ENCODE measurements at regions of chr19 and their contacts with region 1.

Region 1: DNA sequence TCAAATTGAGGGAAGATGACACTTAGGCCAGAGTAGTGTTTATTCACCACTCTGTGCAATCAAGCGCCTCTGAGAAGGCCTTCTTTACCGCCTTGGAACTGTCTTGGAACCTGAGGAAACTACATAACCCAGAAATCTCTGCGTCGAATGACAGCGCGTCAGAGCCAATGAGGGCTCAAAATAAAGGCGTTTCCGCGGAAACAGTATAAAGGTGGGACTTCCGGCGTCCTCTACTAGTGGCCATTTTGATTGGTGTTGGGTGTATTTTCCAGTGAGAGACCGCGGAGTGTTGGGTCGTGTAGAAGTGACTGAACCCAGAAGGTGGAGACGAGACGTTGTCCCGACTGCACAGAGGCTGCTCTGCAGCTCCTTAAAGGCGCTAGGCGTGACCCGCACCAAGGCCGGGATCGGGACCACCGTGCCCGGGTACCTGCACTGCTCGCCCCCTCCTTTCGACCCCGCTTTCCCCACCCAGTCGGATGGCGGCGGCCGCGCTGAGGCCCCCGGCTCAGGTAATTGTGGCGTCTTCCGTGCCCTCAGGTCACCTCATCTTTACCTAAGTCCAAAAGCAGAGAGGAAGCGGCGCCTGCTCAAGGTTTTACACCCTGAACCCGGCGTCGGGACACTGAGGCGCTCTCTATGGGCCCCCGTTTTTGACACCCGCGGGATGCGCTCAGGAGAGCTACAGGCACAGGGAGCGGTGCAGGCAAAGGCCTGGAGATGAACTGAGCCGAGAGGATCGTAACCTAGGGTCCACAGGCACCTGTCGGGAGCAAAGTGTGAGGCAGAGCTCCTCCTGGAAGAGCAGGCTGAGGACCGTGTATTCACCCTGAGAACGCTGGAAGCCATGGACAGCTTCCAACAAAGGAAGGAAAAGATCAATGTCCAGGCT is at the start of gene ZNF776:
- DNase-seq: peak; percentile 85 to 94 (median 87)
- H3K4me3 ChIP-seq: peak within 1 kb of the TSS; percentile 84 to 92 (median 87)
- H3K4me3 Mint-ChIP-seq: peak within 1 kb of the TSS; percentile 98 to 99
- H3K27ac ChIP-seq: peak within 1 kb of the TSS; percentile 68 to 89
- H3K27ac Mint-ChIP-seq: peak within 1 kb of the TSS; percentile 91 to 97 (median 95)
- H3K4me1 ChIP-seq: peaks cover 13% of the 10 kb centered on the region in 2 donors
- H3K4me1 Mint-ChIP-seq: peaks cover 21% of the 10 kb centered on the region
- H3K27me3 ChIP-seq: no peaks in the 10 kb centered on the region
- H3K27me3 Mint-ChIP-seq: peaks cover 2 to 3% (median 2%) of the 10 kb centered on the region in 3 donors
- CTCF ChIP-seq: no peak
- polyA plus RNA-seq, gene ZNF776: 1.9 to 4.4 (median 2.9) TPM

Region 2: DNA sequence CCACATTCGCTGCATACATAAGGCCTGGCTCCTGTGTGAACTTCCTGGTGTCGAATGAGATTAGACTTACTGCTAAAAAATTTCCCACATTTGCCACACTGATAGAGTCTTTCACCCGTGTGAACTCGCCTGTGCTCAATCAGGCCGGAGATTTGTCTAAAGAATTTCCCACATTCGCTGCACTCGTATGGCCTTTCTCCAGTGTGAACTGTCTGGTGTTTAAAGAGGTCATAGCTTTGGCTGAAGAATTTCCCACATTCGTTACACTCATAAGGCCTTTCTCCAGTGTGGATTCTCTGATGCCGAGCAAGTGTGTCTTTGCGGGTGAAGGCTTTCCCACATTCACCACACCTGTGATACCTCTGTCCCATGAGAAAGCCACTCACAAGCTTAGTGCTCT is 25.9 kb before region 1 on chr19:
- intact Hi-C with region 1: loop called in 1 of 2 experiments (anchors 2 kb)
- DNase-seq: no peak
- H3K4me3 ChIP-seq: peak overlapping the region in 1 of 3 experiments; percentile 35
- H3K4me3 Mint-ChIP-seq: no peak overlapping the region
- H3K27ac ChIP-seq: no peak overlapping the region
- H3K27ac Mint-ChIP-seq: no peak overlapping the region
- H3K4me1 ChIP-seq: no peaks in the 10 kb centered on the region
- H3K4me1 Mint-ChIP-seq: no peaks in the 10 kb centered on the region
- H3K27me3 ChIP-seq: no peaks in the 10 kb centered on the region
- H3K27me3 Mint-ChIP-seq: peaks cover 0 to 2% (median 0%) of the 10 kb centered on the region in 3 donors
- CTCF ChIP-seq: no peak

Region 3: DNA sequence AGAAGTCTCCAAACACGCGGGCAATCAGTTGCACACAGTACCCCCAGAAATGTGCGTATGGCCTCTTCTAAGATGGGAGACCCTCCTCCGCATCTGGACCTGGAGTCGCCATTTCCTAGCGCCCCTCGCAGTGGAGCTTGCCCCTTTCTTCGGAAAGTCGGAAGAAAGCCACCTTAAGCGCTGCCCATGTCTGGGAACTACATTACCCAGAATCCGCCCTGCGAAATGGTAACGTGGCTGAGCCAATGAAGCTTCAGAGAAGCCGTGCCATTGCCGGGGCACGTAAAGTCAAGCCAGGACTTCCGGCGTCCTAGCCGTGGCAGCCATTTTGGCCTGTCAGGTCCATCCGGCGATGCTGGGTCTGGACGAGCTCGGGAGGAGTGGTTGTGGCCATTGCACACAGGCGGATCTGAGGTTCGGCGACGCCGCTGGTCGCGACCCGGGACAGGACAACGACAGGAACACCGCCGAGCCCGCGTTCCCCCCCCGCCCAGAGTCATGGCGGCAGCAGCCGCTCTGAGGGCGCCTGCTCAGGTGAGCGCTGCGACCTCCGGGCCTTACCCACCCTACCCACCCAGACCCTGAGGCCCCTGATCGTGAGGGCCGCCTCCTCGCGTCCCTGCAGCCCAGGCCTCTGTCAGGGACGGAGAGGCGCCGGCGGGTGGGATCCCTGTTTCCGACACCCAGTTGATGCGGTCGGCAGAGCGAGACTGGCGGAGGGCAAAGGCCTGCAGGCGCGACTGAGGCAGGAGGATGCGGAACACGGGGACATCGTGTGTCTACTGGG is 22.7 kb after region 1 on chr19 and contains the start of gene ZNF586:
- intact Hi-C with region 1: loop called in 1 of 2 experiments (anchors 2 kb)
- DNase-seq: peak; percentile 90 to 95 (median 90)
- H3K4me3 ChIP-seq: peak within 1 kb of the TSS; percentile 64 to 82 (median 77)
- H3K4me3 Mint-ChIP-seq: peak within 1 kb of the TSS; percentile 88 to 93
- H3K27ac ChIP-seq: peak within 1 kb of the TSS; percentile 66 to 77
- H3K27ac Mint-ChIP-seq: peak within 1 kb of the TSS; percentile 70 to 93 (median 89)
- H3K4me1 ChIP-seq: peaks cover 11 to 18% of the 10 kb centered on the region in 2 donors
- H3K4me1 Mint-ChIP-seq: peaks cover 27% of the 10 kb centered on the region
- H3K27me3 ChIP-seq: no peaks in the 10 kb centered on the region
- H3K27me3 Mint-ChIP-seq: peaks cover 0 to 1% (median 0%) of the 10 kb centered on the region in 3 donors
- CTCF ChIP-seq: no peak
- polyA plus RNA-seq, gene ZNF586: 7.7 to 10.5 (median 10.2) TPM

Region 4: GRCh38 chr19:57819475-57820148 is 72.8 kb after region 1 on chr19:
- intact Hi-C with region 1: loop called in 1 of 2 experiments (anchors 5 kb)
- DNase-seq: peak; percentile 84 to 88 (median 87)
- H3K4me3 ChIP-seq: peak overlapping the region; percentile 65 to 96 (median 89)
- H3K4me3 Mint-ChIP-seq: peak overlapping the region; percentile 95 to 98
- H3K27ac ChIP-seq: peak overlapping the region; percentile 67 to 85
- H3K27ac Mint-ChIP-seq: peak overlapping the region; percentile 90 to 97 (median 95)
- H3K4me1 ChIP-seq: peaks cover 18 to 29% of the 10 kb centered on the region in 2 donors
- H3K4me1 Mint-ChIP-seq: peaks cover 30% of the 10 kb centered on the region
- H3K27me3 ChIP-seq: no peaks in the 10 kb centered on the region
- H3K27me3 Mint-ChIP-seq: peaks cover 0 to 5% (median 0%) of the 10 kb centered on the region in 3 donors
- CTCF ChIP-seq: no peak

Region 5: DNA sequence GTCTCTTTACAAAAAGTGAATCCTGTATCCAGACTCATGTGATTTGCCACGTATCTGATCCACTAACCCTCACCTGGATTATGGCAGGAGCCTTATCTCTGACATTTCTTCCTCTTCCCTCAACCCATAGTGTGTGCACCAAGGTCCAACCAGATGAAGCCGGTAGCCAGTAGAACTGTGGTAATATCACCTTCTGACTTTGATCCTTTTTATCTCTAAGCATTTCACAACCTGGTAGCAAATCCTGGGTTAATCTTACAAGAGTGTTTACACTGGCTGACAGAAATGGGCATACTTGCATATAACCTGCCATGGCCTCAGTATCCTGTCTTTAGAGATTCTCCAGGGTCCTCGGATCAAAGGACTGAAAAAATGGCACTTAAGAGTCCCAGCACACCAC is 167.7 kb after region 1 on chr19:
- intact Hi-C with region 1: loop called in 1 of 2 experiments (anchors 5 kb)
- DNase-seq: no peak
- H3K4me3 ChIP-seq: no peak overlapping the region
- H3K4me3 Mint-ChIP-seq: no peak overlapping the region
- H3K27ac ChIP-seq: no peak overlapping the region
- H3K27ac Mint-ChIP-seq: peak overlapping the region in 1 of 7 donors; percentile 51
- H3K4me1 ChIP-seq: peaks cover 15 to 17% of the 10 kb centered on the region in 2 donors
- H3K4me1 Mint-ChIP-seq: peaks cover 21% of the 10 kb centered on the region
- H3K27me3 ChIP-seq: no peaks in the 10 kb centered on the region
- H3K27me3 Mint-ChIP-seq: peaks cover 0 to 4% (median 0%) of the 10 kb centered on the region in 3 donors
- CTCF ChIP-seq: no peak

Region 6: GRCh38 chr19:58002384-58003173 is 255.8 kb after region 1 on chr19 and contains the start of gene ZNF606:
- intact Hi-C with region 1: loop called in 1 of 2 experiments (anchors 10 kb)
- DNase-seq: peak; percentile 80 to 81 (median 80)
- H3K4me3 ChIP-seq: peak within 1 kb of the TSS; percentile 42 to 91 (median 89)
- H3K4me3 Mint-ChIP-seq: peak within 1 kb of the TSS; percentile 87 to 88
- H3K27ac ChIP-seq: peak within 1 kb of the TSS; percentile 55 to 89
- H3K27ac Mint-ChIP-seq: peak within 1 kb of the TSS; percentile 70 to 92 (median 87)
- H3K4me1 ChIP-seq: peaks cover 22 to 25% of the 10 kb centered on the region in 2 donors
- H3K4me1 Mint-ChIP-seq: peaks cover 33% of the 10 kb centered on the region
- H3K27me3 ChIP-seq: no peaks in the 10 kb centered on the region
- H3K27me3 Mint-ChIP-seq: peaks cover 0 to 1% (median 1%) of the 10 kb centered on the region in 3 donors
- CTCF ChIP-seq: no peak
- polyA plus RNA-seq, gene ZNF606: 0.87 to 1.7 (median 1.2) TPM

Measured in CD14-positive monocyte (primary cell).